ENCODE measurements at regions of chr11 and their contacts with region 1.

Region 1: DNA sequence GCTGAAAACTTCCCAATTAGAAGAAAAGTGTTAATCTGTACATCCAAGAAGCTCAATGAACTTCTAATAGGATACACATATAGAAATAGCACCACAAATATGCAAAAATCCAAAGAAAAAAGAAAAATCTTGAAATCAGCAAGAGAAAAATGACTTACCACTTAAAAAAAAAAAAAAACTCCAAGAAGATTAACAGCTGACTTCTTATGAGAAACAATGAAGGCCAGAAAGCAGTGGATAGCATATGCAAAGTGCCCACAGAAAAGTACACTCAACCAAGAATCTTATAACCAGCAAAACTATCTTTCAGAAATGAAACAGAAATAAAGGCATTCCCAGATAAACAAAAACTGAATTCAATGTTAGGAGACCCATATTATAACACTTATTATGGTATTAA is 29.9 kb upstream of the OR5B12 start:
- DNase-seq: no peak
- ATAC-seq: no peak
- H3K4me3 ChIP-seq: no peak overlapping the region
- H3K27ac ChIP-seq: no peak overlapping the region
- H3K4me1 ChIP-seq: no peaks in the 10 kb centered on the region
- H3K27me3 ChIP-seq: no peaks in the 10 kb centered on the region
- CTCF ChIP-seq: no peak
- POLR2A ChIP-seq: no peak
- RAD21 ChIP-seq: no peak

Region 2: GRCh38 chr11:58301576-58301975 is 170.3 kb before region 1 on chr11:
- CTCF ChIA-PET with region 1: no interaction called
- POLR2A ChIA-PET with region 1: no interaction called
- dilution Hi-C with region 1: no loop called
- in situ Hi-C with region 1: no loop called
- intact Hi-C with region 1: no loop called
- DNase-seq: peak; percentile 84
- ATAC-seq: peak; percentile 91
- H3K4me3 ChIP-seq: no peak overlapping the region
- H3K27ac ChIP-seq: no peak overlapping the region
- H3K4me1 ChIP-seq: no peaks in the 10 kb centered on the region; the same call in 1 of the 2 replicates
- H3K27me3 ChIP-seq: no peaks in the 10 kb centered on the region
- CTCF ChIP-seq: 0 out of 2 replicates have a peak, but pooled peaks have one; percentile 3
- POLR2A ChIP-seq: no peak
- RAD21 ChIP-seq: no peak

Region 3: DNA sequence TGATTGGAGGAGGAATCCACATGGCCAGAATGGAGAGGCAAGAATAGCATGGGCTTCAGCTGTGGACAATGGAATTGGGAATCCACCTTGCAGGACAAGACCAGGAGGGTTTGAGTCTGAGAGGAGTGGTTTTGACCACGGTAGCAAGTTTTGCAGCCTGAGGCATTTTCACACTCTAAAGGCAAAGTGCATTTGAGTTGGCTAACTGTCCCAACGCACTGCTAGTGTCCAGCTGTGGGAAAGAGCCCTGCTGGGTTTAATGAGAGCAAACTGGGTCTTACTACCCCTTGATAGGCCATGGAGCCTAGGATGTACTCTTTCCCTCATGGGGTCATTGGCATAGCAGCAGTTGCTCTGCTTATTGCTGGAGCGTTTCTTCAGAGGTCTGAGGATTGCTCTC is 43.9 kb before region 1 on chr11 and contains the start of gene OR5B2:
- CTCF ChIA-PET with region 1: no interaction called
- POLR2A ChIA-PET with region 1: no interaction called
- dilution Hi-C with region 1: no loop called
- in situ Hi-C with region 1: no loop called
- intact Hi-C with region 1: loop called (anchors 1 kb)
- DNase-seq: no peak
- ATAC-seq: no peak
- H3K4me3 ChIP-seq: no peak within 1 kb of the TSS
- H3K27ac ChIP-seq: no peak within 1 kb of the TSS
- H3K4me1 ChIP-seq: no peaks in the 10 kb centered on the region
- H3K27me3 ChIP-seq: no peaks in the 10 kb centered on the region
- CTCF ChIP-seq: no peak
- POLR2A ChIP-seq: no peak
- RAD21 ChIP-seq: no peak
- total RNA-seq, gene OR5B2: under 0.01 TPM in 1 of 2 replicates, not detected in the other

Region 4: GRCh38 chr11:58485961-58486360 is 14.1 kb after region 1 on chr11:
- CTCF ChIA-PET with region 1: no interaction called
- POLR2A ChIA-PET with region 1: no interaction called
- dilution Hi-C with region 1: no loop called
- in situ Hi-C with region 1: no loop called
- intact Hi-C with region 1: no loop called
- DNase-seq: no peak
- ATAC-seq: no peak
- H3K4me3 ChIP-seq: no peak overlapping the region
- H3K27ac ChIP-seq: no peak overlapping the region
- H3K4me1 ChIP-seq: no peaks in the 10 kb centered on the region
- H3K27me3 ChIP-seq: no peaks in the 10 kb centered on the region
- CTCF ChIP-seq: no peak
- POLR2A ChIP-seq: no peak
- RAD21 ChIP-seq: no peak

Region 5: DNA sequence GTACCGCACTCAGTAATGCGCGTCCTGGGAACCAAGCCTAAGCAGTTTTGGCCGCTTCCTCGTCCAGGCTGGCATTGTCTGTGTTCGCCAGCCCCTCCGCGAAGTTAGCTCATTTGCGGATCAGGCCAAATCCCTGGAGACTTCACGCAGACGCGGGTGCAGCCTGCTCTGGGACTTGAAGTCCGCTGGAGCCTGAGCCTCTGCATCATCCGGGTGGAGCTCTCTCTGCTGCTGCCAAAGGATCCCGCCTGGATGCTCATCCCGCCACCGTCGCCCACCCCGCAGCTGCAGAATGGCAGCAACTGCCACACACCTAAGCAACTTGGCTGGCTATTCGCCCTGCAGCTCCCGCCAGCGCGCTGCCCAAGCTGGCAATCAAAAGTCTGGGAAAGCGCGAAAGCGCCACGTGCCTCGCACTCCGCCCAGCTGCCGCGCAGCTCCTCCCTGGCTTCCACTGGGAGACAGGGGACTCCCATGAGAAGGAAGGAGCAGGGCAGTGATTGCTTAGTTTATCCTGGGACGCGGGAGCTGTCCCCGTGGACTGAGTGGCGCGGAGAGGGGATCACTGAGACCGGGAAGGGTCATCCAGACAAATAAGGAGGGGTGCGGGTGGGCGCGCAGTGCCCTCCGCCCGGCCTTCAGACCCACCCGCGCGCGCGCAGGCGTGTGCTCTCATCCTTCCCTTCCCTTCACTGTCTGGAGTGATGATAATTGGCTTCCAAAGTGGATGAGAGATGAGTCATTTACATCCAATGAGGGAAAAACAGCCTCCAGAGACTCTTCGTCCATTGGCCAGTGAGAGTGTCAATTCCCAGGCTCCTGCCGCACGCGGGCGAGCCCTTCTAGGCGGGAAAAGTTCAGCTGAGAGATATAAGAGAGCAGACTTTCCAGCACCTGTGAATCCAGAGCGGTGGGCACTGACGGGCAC is 591.0 kb after region 1 on chr11:
- CTCF ChIA-PET with region 1: no interaction called
- POLR2A ChIA-PET with region 1: no interaction called
- dilution Hi-C with region 1: no loop called
- in situ Hi-C with region 1: no loop called
- intact Hi-C with region 1: no loop called
- DNase-seq: no peak
- ATAC-seq: no peak
- H3K4me3 ChIP-seq: no peak overlapping the region
- H3K27ac ChIP-seq: no peak overlapping the region
- H3K4me1 ChIP-seq: no peaks in the 10 kb centered on the region
- H3K27me3 ChIP-seq: peaks cover 24% of the 10 kb centered on the region
- CTCF ChIP-seq: no peak
- POLR2A ChIP-seq: no peak
- RAD21 ChIP-seq: no peak

Measured in IMR-90 (cell line).